ENCODE measurements at regions of chr11 and their contacts with region 1.

Region 1: DNA sequence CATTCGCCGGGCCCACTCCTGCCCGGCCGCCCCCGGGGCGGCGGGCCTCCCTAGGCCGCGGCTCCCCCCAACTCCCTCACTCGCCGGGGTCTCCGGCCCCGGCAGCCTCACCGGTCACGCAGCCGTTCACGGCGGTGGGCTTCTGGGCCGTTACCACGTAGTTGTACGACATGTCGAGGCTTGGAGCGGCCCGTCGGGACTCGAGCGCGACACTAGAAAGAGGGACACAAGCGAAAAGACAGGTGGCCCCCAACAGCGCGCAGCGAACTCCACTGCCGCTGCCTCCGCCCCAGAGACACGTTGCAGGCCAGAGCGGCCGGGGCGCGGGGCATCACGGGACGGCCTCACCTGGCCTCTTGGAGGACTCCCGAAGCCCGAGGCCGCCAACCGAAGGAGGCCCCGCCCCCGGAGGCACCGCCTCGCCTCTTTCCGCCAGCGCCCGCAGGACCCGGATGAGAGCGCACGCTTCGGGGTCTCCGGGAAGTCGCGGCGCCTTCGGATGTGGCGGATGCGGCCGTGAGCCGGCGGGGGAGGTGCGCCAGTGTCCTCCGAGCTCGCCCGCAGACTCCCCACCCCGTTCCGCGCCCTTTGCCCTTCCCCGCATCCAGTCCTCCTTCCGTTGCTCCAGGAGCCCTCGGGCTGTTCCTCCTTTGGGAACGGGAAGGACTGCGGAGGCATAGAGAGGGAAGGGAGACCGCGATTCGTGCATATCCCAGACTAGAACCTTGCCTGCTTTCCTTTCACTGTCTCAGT is at the starts of genes DDB1 and TKFC:
- DNase-seq: peak; percentile 96 to 97 (median 97)
- H3K4me3 ChIP-seq: peak within 1 kb of the TSS; percentile 85 to 95
- H3K4me3 Mint-ChIP-seq: peak within 1 kb of the TSS; percentile 89 to 97 (median 96)
- H3K27ac ChIP-seq: peak within 1 kb of the TSS; percentile 83
- H3K27ac Mint-ChIP-seq: peak within 1 kb of the TSS; percentile 92 to 99 (median 98)
- H3K4me1 ChIP-seq: peaks cover 39% of the 10 kb centered on the region
- H3K4me1 Mint-ChIP-seq: peaks cover 36 to 71% (median 54%) of the 10 kb centered on the region in 4 donors
- H3K27me3 ChIP-seq: no peaks in the 10 kb centered on the region
- H3K27me3 Mint-ChIP-seq: no peaks in the 10 kb centered on the region
- total RNA-seq, gene DDB1: 156 to 169 TPM
- total RNA-seq, gene TKFC: 42.1 to 43.9 TPM

Region 2: DNA sequence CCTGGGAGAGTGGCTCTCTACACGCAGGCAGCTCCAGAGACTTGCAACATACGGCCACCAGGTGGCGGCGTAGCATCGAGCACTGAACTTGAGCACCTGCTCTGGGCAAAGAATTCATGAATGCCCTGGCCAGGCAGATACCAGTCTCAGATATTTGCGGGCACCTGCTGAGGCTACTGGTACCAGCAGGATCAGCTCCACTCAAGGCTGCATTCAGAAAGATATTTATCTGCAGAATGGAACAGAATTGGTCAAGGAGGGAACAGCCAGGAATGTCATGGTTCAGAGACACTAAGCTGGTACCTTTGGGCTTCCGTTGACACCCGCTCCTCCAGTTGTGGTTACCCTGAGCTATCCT is 501.9 kb before region 1 on chr11:
- CTCF ChIA-PET with region 1: interaction called, 4 read pairs
- POLR2A ChIA-PET with region 1: no interaction called
- intact Hi-C with region 1: loop called (anchors 1 kb)
- DNase-seq: peak; percentile 68 to 77 (median 73)
- H3K4me3 ChIP-seq: no peak overlapping the region
- H3K4me3 Mint-ChIP-seq: peak overlapping the region in 2 of 8 donors; percentile 63 to 78
- H3K27ac ChIP-seq: no peak overlapping the region
- H3K27ac Mint-ChIP-seq: peak overlapping the region in 2 of 7 donors; percentile 83 to 93
- H3K4me1 ChIP-seq: no peaks in the 10 kb centered on the region
- H3K4me1 Mint-ChIP-seq: peaks cover 0 to 3% (median 0%) of the 10 kb centered on the region in 4 donors
- H3K27me3 ChIP-seq: no peaks in the 10 kb centered on the region
- H3K27me3 Mint-ChIP-seq: peaks cover 3 to 8% of the 10 kb centered on the region in 2 donors

Region 3: GRCh38 chr11:61294717-61295595 is 38.0 kb before region 1 on chr11 and contains the start of gene VWCE:
- CTCF ChIA-PET with region 1: no interaction called
- POLR2A ChIA-PET with region 1: no interaction called
- intact Hi-C with region 1: no loop called
- DNase-seq: peak; percentile 44 to 58 (median 52)
- H3K4me3 ChIP-seq: peak within 1 kb of the TSS in 1 of 2 donors; percentile 45
- H3K4me3 Mint-ChIP-seq: peak within 1 kb of the TSS; percentile 67 to 84 (median 79)
- H3K27ac ChIP-seq: no peak within 1 kb of the TSS
- H3K27ac Mint-ChIP-seq: peak within 1 kb of the TSS in 1 of 7 donors; percentile 25
- H3K4me1 ChIP-seq: peaks cover 16% of the 10 kb centered on the region
- H3K4me1 Mint-ChIP-seq: peaks cover 21 to 39% (median 28%) of the 10 kb centered on the region in 4 donors
- H3K27me3 ChIP-seq: peaks cover 4% of the 10 kb centered on the region
- H3K27me3 Mint-ChIP-seq: peaks cover 11 to 12% of the 10 kb centered on the region in 2 donors
- total RNA-seq, gene VWCE: 0.38 to 0.44 TPM

Region 4: GRCh38 chr11:61347916-61348461 is 15.0 kb after region 1 on chr11:
- CTCF ChIA-PET with region 1: interaction called, 14 read pairs
- POLR2A ChIA-PET with region 1: no interaction called
- intact Hi-C with region 1: no loop called
- DNase-seq: no peak
- H3K4me3 ChIP-seq: no peak overlapping the region
- H3K4me3 Mint-ChIP-seq: no peak overlapping the region
- H3K27ac ChIP-seq: no peak overlapping the region
- H3K27ac Mint-ChIP-seq: peak overlapping the region in 2 of 7 donors; percentile 27 to 36
- H3K4me1 ChIP-seq: no peaks in the 10 kb centered on the region
- H3K4me1 Mint-ChIP-seq: peaks cover 0 to 4% (median 0%) of the 10 kb centered on the region in 4 donors
- H3K27me3 ChIP-seq: no peaks in the 10 kb centered on the region
- H3K27me3 Mint-ChIP-seq: no peaks in the 10 kb centered on the region

Region 5: DNA sequence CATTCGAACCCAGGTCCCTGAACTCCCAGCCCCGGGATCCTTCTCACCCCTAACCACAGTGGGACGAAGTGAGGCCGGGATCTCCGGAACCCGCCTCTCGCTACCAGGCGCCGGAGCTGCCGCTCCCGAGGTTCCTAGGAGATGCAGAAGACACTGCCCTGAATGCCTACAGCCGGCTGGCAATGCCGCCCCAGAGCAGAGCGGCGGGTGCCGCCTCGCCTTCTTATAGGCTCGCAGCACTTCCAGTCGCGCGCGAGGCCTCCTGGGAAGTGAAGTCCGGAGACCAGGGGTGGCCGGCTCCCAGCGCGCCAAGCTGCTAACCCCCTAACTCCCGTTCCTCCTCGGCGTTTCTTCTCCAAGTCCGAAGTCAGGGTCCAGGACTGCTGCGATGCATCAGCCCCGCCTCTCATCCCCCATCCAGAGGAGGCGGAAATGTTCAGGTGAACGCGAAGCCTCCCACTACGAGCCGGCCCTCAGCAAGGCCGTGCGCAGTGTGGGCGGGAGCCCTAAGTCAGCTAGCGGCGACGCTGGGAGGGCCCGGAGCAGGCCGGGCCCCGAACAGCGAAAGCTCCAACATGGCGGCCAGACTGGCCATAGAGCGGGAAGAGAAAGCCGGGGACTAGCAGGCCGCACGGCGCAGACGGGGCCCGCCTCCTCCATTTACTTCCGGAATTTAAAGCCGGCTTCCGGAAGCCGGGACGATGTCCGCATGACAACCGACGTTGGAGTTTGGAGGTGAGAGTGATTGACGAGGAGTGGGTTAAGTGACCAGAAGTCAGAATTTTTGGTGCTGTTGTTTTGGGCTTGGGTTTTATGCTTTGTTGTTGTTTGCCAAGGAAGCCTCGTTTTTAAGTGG is 28.9 kb after region 1 on chr11 and contains the starts of genes CYB561A3 and TMEM138:
- CTCF ChIA-PET with region 1: interaction called, 92 read pairs
- POLR2A ChIA-PET with region 1: interaction called, 97 read pairs
- intact Hi-C with region 1: loop called (anchors 1 kb)
- DNase-seq: peak; percentile 83 to 90 (median 85)
- H3K4me3 ChIP-seq: peak within 1 kb of the TSS; percentile 87 to 95
- H3K4me3 Mint-ChIP-seq: peak within 1 kb of the TSS; percentile 93 to 100 (median 98)
- H3K27ac ChIP-seq: peak within 1 kb of the TSS; percentile 95
- H3K27ac Mint-ChIP-seq: peak within 1 kb of the TSS; percentile 92 to 100 (median 99)
- H3K4me1 ChIP-seq: peaks cover 27% of the 10 kb centered on the region
- H3K4me1 Mint-ChIP-seq: peaks cover 21 to 51% (median 33%) of the 10 kb centered on the region in 4 donors
- H3K27me3 ChIP-seq: no peaks in the 10 kb centered on the region
- H3K27me3 Mint-ChIP-seq: no peaks in the 10 kb centered on the region
- total RNA-seq, gene CYB561A3: 40.1 to 42.6 TPM
- total RNA-seq, gene TMEM138: 61.2 to 62.5 TPM

Region 6: GRCh38 chr11:61384271-61385242 is 51.6 kb after region 1 on chr11:
- CTCF ChIA-PET with region 1: interaction called, 442 read pairs
- POLR2A ChIA-PET with region 1: interaction called, 89 read pairs
- intact Hi-C with region 1: no loop called
- DNase-seq: no peak
- H3K4me3 ChIP-seq: no peak overlapping the region
- H3K4me3 Mint-ChIP-seq: no peak overlapping the region
- H3K27ac ChIP-seq: no peak overlapping the region
- H3K27ac Mint-ChIP-seq: peak overlapping the region in 1 of 7 donors; percentile 18
- H3K4me1 ChIP-seq: peaks cover 8% of the 10 kb centered on the region
- H3K4me1 Mint-ChIP-seq: peaks cover 3 to 9% (median 6%) of the 10 kb centered on the region in 4 donors
- H3K27me3 ChIP-seq: no peaks in the 10 kb centered on the region
- H3K27me3 Mint-ChIP-seq: no peaks in the 10 kb centered on the region

Region 7: DNA sequence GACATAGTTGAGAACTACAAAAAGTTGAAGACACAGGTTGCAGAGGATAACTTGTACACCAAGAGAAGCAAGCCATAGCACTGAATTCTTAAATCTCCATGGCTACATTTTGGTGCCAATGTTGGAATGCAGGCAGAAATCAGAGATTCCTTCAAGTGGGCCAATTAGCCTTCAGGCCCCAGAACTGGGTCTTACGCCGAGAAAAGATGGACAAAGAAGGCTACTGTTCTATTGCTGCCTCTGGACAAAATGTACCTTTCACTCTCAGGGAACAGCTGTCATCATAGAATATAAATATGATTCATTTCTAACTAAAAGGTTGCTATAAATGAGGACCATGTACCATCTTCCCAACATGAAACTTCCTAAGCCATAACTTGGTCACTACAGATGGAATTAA is 73.1 kb after region 1 on chr11:
- CTCF ChIA-PET with region 1: interaction called, 13 read pairs
- POLR2A ChIA-PET with region 1: interaction called, 3 read pairs
- intact Hi-C with region 1: no loop called
- DNase-seq: no peak
- H3K4me3 ChIP-seq: no peak overlapping the region
- H3K4me3 Mint-ChIP-seq: no peak overlapping the region
- H3K27ac ChIP-seq: no peak overlapping the region
- H3K27ac Mint-ChIP-seq: no peak overlapping the region
- H3K4me1 ChIP-seq: no peaks in the 10 kb centered on the region
- H3K4me1 Mint-ChIP-seq: peaks cover 0 to 4% (median 1%) of the 10 kb centered on the region in 4 donors
- H3K27me3 ChIP-seq: no peaks in the 10 kb centered on the region
- H3K27me3 Mint-ChIP-seq: no peaks in the 10 kb centered on the region

Region 8: GRCh38 chr11:61446211-61446651 is 113.3 kb after region 1 on chr11:
- CTCF ChIA-PET with region 1: interaction called, 12 read pairs
- POLR2A ChIA-PET with region 1: no interaction called
- intact Hi-C with region 1: no loop called
- DNase-seq: peak; percentile 33 to 68 (median 50)
- H3K4me3 ChIP-seq: no peak overlapping the region
- H3K4me3 Mint-ChIP-seq: no peak overlapping the region
- H3K27ac ChIP-seq: no peak overlapping the region
- H3K27ac Mint-ChIP-seq: peak overlapping the region in 2 of 7 donors; percentile 61 to 70
- H3K4me1 ChIP-seq: no peaks in the 10 kb centered on the region
- H3K4me1 Mint-ChIP-seq: peaks cover 11 to 18% (median 13%) of the 10 kb centered on the region in 4 donors
- H3K27me3 ChIP-seq: no peaks in the 10 kb centered on the region
- H3K27me3 Mint-ChIP-seq: no peaks in the 10 kb centered on the region

Measured in CD4-positive, alpha-beta memory T cell (primary cell).